Activated CD8-positive, alpha-beta T cell treated with anti-CD3 and anti-CD28 coated beads for 36 hours (primary cell): ENCODE measurements at regions of chr22 and their contacts with region 1.

Region 1: DNA sequence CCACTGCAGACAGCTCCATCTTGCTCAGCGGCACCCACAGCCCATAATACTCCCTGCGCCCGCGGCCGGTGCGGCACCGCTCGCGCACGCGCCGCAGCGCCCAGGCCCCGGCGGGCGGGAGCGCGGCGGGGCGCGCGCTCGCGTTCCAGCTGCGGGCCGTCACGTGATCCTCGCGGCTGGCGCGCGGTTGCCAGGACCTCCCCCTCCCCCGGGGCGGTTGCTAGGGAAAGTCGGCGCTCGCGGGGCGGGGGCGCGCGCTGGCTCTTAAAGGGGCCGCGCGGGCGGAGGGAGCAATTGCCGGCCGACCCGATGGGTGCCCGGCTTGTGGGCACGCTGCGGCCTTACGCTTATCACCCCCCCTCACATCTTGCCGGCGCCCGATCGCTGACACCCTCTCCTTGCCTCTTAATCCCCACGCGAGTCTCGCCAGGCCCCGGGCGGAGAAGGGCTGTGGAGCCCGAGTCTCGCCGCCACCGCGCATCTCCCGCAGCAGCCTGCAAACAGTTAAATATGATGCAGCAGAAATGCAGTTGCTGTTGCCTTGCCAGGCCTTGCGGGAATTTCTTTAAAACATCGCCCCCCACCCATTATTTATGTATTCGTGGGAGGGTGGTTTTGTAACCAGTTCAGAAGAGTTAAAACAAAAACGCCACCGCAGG is at the start of gene CBX6:
- DNase-seq: peak; percentile 95
- ATAC-seq: peak; percentile 64
- H3K4me3 Mint-ChIP-seq: peak within 1 kb of the TSS; percentile 92
- H3K27ac Mint-ChIP-seq: peak within 1 kb of the TSS; percentile 94
- H3K4me1 Mint-ChIP-seq: peaks cover 58% of the 10 kb centered on the region
- H3K27me3 Mint-ChIP-seq: no peaks in the 10 kb centered on the region
- CTCF ChIP-seq: no peak
- total RNA-seq, gene CBX6: 97.7 to 99.4 TPM

Region 2: DNA sequence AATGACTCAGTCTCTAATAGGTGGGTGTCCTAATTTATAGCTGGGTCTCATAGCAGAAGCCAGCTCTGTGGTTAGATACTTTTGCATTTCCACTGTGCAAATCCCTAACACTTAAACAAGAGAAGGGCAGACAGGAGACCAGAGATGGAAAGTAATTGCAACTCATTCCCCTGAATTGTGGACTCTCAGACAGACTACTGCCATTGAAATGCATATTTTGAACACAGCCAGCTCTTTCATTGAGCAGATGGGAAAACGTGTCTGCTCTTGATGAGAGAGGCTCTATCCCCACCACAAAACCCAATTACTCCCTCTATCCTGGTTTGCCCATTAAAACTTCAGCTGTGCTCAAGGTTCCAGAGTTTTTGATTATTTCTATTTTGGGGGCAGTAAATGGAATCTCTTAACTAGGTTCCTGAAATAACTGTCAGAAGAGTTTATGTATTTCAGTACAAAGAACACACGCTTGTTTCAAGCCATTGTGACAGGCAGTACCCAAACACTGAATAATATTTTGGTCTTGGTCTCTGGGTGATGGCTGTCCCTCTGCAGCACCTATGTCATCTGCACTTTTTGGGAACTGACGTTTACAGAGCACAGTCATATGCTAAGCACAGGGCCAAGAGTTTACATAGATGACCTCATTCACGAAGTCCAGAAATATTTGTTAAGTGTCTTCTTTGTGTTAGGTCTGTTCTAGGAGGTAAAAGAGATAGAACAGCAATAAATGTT is 257.8 kb before region 1 on chr22:
- CTCF ChIA-PET with region 1: no interaction called
- POLR2A ChIA-PET with region 1: no interaction called
- intact Hi-C with region 1: no loop called
- DNase-seq: no peak
- ATAC-seq: no peak
- H3K4me3 Mint-ChIP-seq: no peak overlapping the region
- H3K27ac Mint-ChIP-seq: no peak overlapping the region
- H3K4me1 Mint-ChIP-seq: no peaks in the 10 kb centered on the region
- H3K27me3 Mint-ChIP-seq: no peaks in the 10 kb centered on the region
- CTCF ChIP-seq: no peak

Region 3: GRCh38 chr22:38684895-38685294 is 187.4 kb before region 1 on chr22:
- CTCF ChIA-PET with region 1: no interaction called
- POLR2A ChIA-PET with region 1: no interaction called
- intact Hi-C with region 1: no loop called
- DNase-seq: no peak
- ATAC-seq: no peak
- H3K4me3 Mint-ChIP-seq: no peak overlapping the region
- H3K27ac Mint-ChIP-seq: peak overlapping the region; percentile 46
- H3K4me1 Mint-ChIP-seq: peaks cover 26% of the 10 kb centered on the region
- H3K27me3 Mint-ChIP-seq: no peaks in the 10 kb centered on the region
- CTCF ChIP-seq: no peak

Region 4: DNA sequence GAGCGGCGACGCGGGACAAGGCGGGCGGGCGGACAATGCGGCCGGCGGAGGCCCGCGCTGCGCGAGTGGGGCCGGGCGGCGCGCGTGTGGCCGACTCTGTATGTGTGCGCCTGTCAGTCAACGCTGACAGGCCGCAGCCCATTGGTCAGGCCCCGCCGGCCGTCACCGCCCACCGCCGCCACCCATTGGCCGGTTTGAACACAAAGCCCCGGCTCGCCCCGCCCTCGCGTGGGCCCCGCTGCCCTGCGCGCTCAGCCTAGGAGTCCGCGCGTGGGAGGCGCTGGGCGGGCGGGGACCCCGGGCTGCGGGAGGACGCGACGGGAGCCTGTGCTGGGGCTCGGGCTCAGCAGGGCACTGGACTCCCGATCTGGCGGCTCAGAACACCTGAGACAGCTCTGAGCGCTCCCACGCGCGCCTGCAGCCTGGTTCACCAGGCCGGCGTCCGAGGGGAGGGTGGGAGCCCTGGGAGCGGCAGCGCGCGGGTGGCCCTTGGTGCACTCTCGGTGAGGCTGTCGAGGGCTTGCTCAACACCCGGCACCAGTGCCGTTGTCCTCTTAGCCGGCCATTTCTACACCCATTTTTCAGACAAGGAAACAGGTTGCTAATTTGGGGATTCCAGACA is 116.3 kb before region 1 on chr22 and contains the start of gene SUN2:
- CTCF ChIA-PET with region 1: interaction called, 11 read pairs
- POLR2A ChIA-PET with region 1: interaction called, 6 read pairs
- intact Hi-C with region 1: no loop called
- DNase-seq: peak; percentile 95
- ATAC-seq: peak; percentile 73
- H3K4me3 Mint-ChIP-seq: peak within 1 kb of the TSS; percentile 87
- H3K27ac Mint-ChIP-seq: peak within 1 kb of the TSS; percentile 99
- H3K4me1 Mint-ChIP-seq: peaks cover 54% of the 10 kb centered on the region
- H3K27me3 Mint-ChIP-seq: no peaks in the 10 kb centered on the region
- CTCF ChIP-seq: no peak
- total RNA-seq, gene SUN2: 101 to 107 TPM

Region 5: DNA sequence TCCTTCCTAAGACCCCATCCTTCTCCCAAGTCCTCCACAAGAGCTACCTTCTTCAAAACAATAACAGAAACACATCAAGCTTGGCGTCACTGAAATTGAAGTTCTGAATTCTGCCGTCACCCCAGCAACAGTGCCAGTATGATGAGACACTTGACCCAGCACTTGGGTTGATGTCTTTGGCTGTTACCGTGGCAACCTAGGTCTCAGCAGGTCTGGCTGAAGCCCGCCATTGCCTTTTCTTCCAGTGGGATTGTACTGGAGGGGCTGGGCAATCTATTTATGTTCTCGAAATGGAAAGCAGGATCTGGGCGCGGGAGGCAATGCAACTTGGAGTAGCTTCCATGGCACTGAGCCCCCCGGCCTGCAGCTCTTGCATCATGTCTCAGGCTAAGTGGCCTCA is 52.3 kb before region 1 on chr22:
- CTCF ChIA-PET with region 1: no interaction called
- POLR2A ChIA-PET with region 1: no interaction called
- intact Hi-C with region 1: no loop called
- DNase-seq: no peak
- ATAC-seq: no peak
- H3K4me3 Mint-ChIP-seq: no peak overlapping the region
- H3K27ac Mint-ChIP-seq: no peak overlapping the region
- H3K4me1 Mint-ChIP-seq: no peaks in the 10 kb centered on the region
- H3K27me3 Mint-ChIP-seq: no peaks in the 10 kb centered on the region
- CTCF ChIP-seq: no peak

Region 6: GRCh38 chr22:38901111-38901641 is 28.9 kb after region 1 on chr22:
- CTCF ChIA-PET with region 1: interaction called, 10 read pairs
- POLR2A ChIA-PET with region 1: interaction called, 3 read pairs
- intact Hi-C with region 1: no loop called
- DNase-seq: no peak
- ATAC-seq: no peak
- H3K4me3 Mint-ChIP-seq: no peak overlapping the region
- H3K27ac Mint-ChIP-seq: no peak overlapping the region
- H3K4me1 Mint-ChIP-seq: peaks cover 10% of the 10 kb centered on the region
- H3K27me3 Mint-ChIP-seq: peaks cover 12% of the 10 kb centered on the region
- CTCF ChIP-seq: no peak

Region 7: DNA sequence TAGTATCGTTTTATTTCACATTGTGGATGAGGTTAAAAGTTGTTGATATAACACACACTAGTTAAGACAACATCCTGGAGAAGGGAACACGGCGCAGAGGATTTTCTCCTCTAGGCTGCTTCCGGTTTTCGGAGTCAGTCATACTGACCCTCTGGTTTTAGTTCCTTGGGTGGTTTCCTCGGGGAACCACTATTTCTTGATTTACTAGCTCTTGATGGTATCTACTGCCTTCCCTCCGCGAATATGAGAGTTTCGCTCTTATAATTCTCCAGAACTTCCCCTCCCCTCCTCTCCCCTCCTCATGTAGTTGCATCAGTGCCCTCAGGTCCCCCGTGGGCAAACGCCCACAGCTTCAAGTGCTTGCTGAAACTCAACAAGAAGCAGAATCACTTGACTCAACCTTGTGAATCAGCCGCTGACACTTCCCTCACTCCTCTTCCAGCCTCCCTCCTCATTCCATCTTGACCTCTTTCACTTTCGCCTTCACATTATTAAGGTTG is 69.2 kb after region 1 on chr22:
- CTCF ChIA-PET with region 1: interaction called, 7 read pairs
- POLR2A ChIA-PET with region 1: interaction called, 6 read pairs
- intact Hi-C with region 1: loop called (anchors 5 kb)
- DNase-seq: peak; percentile 91
- ATAC-seq: peak; percentile 86
- H3K4me3 Mint-ChIP-seq: peak overlapping the region; percentile 43
- H3K27ac Mint-ChIP-seq: peak overlapping the region; percentile 85
- H3K4me1 Mint-ChIP-seq: peaks cover 31% of the 10 kb centered on the region
- H3K27me3 Mint-ChIP-seq: peaks cover 36% of the 10 kb centered on the region
- CTCF ChIP-seq: no peak

Region 8: GRCh38 chr22:38973289-38974169 is 101.2 kb after region 1 on chr22:
- CTCF ChIA-PET with region 1: interaction called, 36 read pairs
- POLR2A ChIA-PET with region 1: interaction called, 5 read pairs
- intact Hi-C with region 1: no loop called
- DNase-seq: peak; percentile 77
- ATAC-seq: peak; percentile 97
- H3K4me3 Mint-ChIP-seq: no peak overlapping the region
- H3K27ac Mint-ChIP-seq: no peak overlapping the region
- H3K4me1 Mint-ChIP-seq: peaks cover 3% of the 10 kb centered on the region
- H3K27me3 Mint-ChIP-seq: peaks cover 17% of the 10 kb centered on the region
- CTCF ChIP-seq: peak; percentile 93

Region 9: GRCh38 chr22:38996105-38996504 is 123.8 kb after region 1 on chr22:
- CTCF ChIA-PET with region 1: interaction called, 130 read pairs
- POLR2A ChIA-PET with region 1: interaction called, 3 read pairs
- intact Hi-C with region 1: loop called (anchors 5 kb)
- DNase-seq: no peak
- ATAC-seq: no peak
- H3K4me3 Mint-ChIP-seq: no peak overlapping the region
- H3K27ac Mint-ChIP-seq: no peak overlapping the region
- H3K4me1 Mint-ChIP-seq: peaks cover 8% of the 10 kb centered on the region
- H3K27me3 Mint-ChIP-seq: peaks cover 14% of the 10 kb centered on the region
- CTCF ChIP-seq: no peak

Region 10: DNA sequence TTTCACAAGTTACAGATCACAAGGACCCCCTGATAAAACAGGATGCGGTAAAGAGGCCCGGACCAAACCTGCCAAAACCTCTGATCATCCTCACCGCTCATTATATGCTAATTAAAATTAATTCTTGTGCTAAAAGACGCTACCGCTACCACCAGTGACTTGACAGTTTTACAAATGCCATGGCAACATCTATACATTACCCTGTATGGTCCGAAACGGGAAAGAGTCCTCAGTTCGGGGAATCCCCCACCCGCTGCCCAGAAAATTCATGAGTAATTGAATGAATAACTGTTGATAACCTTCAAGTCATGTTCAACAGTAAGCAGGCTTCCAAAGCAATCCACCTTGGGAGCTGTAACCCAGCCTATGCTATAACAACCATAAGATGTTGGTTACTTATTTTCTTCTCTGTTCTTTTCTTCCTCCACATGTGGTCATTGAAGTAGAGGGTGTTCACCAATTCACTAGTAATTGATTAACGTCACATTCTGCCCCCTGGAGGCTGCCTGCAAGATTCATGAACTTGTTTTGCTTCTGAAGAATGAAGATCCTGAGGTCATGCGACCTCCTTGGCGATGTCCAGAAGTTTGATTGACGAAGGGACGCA is 245.4 kb after region 1 on chr22:
- CTCF ChIA-PET with region 1: interaction called, 9 read pairs
- POLR2A ChIA-PET with region 1: interaction called, 4 read pairs
- intact Hi-C with region 1: loop called (anchors 10 kb)
- DNase-seq: peak; percentile 91
- ATAC-seq: peak; percentile 70
- H3K4me3 Mint-ChIP-seq: peak overlapping the region; percentile 48
- H3K27ac Mint-ChIP-seq: peak overlapping the region; percentile 93
- H3K4me1 Mint-ChIP-seq: peaks cover 59% of the 10 kb centered on the region
- H3K27me3 Mint-ChIP-seq: no peaks in the 10 kb centered on the region
- CTCF ChIP-seq: peak; percentile 66